ENCODE measurements at regions of chr4 and their contacts with region 1.

Region 1: GRCh38 chr4:41185614-41186597 is 28.4 kb downstream of the APBB2 start:
- DNase-seq: no peak
- ATAC-seq: no peak; the same call in 2 of the 3 replicates
- H3K4me3 ChIP-seq: peak overlapping the region; percentile 56
- H3K27ac ChIP-seq: peak overlapping the region; percentile 72
- H3K4me1 ChIP-seq: peaks cover 13% of the 10 kb centered on the region
- H3K27me3 ChIP-seq: no peaks in the 10 kb centered on the region
- CTCF ChIP-seq: no peak
- EP300 ChIP-seq: no peak
- POLR2A ChIP-seq: no peak
- RAD21 ChIP-seq: no peak

Region 2: GRCh38 chr4:41196633-41197332 is 10.9 kb after region 1 on chr4:
- CTCF ChIA-PET with region 1: interaction called, 6 read pairs
- POLR2A ChIA-PET with region 1: interaction called, 8 read pairs
- RAD21 ChIA-PET with region 1: interaction called, 5 read pairs
- SMC1A ChIA-PET with region 1: interaction called, 14 read pairs
- in situ Hi-C with region 1: no loop called
- intact Hi-C with region 1: no loop called
- DNase-seq: no peak
- ATAC-seq: no peak
- H3K4me3 ChIP-seq: no peak overlapping the region
- H3K27ac ChIP-seq: no peak overlapping the region
- H3K4me1 ChIP-seq: peaks cover 22% of the 10 kb centered on the region
- H3K27me3 ChIP-seq: no peaks in the 10 kb centered on the region
- CTCF ChIP-seq: no peak
- EP300 ChIP-seq: no peak
- POLR2A ChIP-seq: no peak
- RAD21 ChIP-seq: no peak

Measured in GM12878 (cell line).